ENCODE measurements at regions of chr12 and their contacts with region 1.

Region 1: GRCh38 chr12:25958428-25959070 is at the start of gene RASSF8:
- DNase-seq: peak in 39 of 42 donors; percentile 30 to 87 (median 73)

Region 2: DNA sequence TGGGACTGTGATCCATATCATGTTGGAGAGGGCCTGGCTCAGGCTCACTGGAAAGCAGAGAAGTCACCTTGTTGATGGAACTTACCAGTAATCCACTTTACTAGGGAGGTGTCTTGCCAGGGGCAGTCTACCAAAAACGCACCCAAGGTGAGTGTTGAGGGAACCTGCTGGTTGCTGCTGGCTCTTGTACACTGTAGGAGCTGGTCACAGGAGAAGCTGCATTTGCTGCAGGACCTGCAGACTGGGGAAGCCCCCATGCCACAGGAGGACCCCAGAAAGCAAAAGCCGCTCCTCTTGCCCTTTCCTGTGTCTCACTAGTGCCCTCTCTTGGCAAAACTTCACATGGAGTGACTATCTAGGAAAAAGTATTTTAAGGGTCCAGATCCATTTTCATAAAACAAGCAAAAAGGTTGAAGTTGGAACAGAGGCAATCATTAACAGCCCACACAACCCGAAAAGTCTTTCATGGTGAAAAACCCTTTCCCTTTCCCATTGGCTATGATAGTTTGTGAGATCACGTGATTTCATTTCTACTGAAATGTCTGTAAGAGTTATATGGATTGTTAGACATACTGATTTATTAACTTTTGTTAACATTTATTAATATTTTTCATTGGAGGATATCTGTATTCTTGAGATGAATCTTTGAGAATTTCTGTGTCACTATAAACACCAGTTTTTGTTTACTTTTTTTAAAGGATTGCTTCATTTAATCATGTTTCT is 59.1 kb after region 1 on chr12:
- intact Hi-C with region 1: loop called (anchors 5 kb)
- DNase-seq: peak in 11 of 42 donors; percentile 23 to 73 (median 47)

Region 3: GRCh38 chr12:26034371-26035142 is 76.0 kb after region 1 on chr12:
- intact Hi-C with region 1: loop called (anchors 5 kb)
- DNase-seq: no peak

Measured in head of caudate nucleus (tissue), 42 donors.